Naive thymus-derived CD4-positive, alpha-beta T cell (primary cell): ENCODE measurements at regions of chr14 and their contacts with region 1.

Region 1: GRCh38 chr14:58297762-58298476 is 436 bp upstream of the ARID4A start:
- DNase-seq: peak; percentile 90 to 100 (median 99)
- ATAC-seq: peak; percentile 91
- H3K4me3 ChIP-seq: peak overlapping the region; percentile 91
- H3K4me3 Mint-ChIP-seq: no peak overlapping the region
- H3K27ac ChIP-seq: peak overlapping the region; percentile 94
- H3K27ac Mint-ChIP-seq: no peak overlapping the region
- H3K4me1 ChIP-seq: peaks cover 17 to 23% of the 10 kb centered on the region in 2 donors
- H3K4me1 Mint-ChIP-seq: peaks cover 36 to 64% (median 55%) of the 10 kb centered on the region in 7 donors
- H3K27me3 ChIP-seq: no peaks in the 10 kb centered on the region
- H3K27me3 Mint-ChIP-seq: no peaks in the 10 kb centered on the region

Region 2: GRCh38 chr14:56633544-56633943 is 1664.4 kb before region 1 on chr14:
- CTCF ChIA-PET with region 1: no interaction called
- POLR2A ChIA-PET with region 1: no interaction called
- intact Hi-C with region 1: no loop called
- DNase-seq: no peak
- ATAC-seq: no peak
- H3K4me3 ChIP-seq: no peak overlapping the region
- H3K4me3 Mint-ChIP-seq: no peak overlapping the region
- H3K27ac ChIP-seq: no peak overlapping the region
- H3K27ac Mint-ChIP-seq: no peak overlapping the region
- H3K4me1 ChIP-seq: no peaks in the 10 kb centered on the region
- H3K4me1 Mint-ChIP-seq: peaks cover 0 to 2% (median 0%) of the 10 kb centered on the region in 7 donors
- H3K27me3 ChIP-seq: no peaks in the 10 kb centered on the region
- H3K27me3 Mint-ChIP-seq: no peaks in the 10 kb centered on the region

Region 3: DNA sequence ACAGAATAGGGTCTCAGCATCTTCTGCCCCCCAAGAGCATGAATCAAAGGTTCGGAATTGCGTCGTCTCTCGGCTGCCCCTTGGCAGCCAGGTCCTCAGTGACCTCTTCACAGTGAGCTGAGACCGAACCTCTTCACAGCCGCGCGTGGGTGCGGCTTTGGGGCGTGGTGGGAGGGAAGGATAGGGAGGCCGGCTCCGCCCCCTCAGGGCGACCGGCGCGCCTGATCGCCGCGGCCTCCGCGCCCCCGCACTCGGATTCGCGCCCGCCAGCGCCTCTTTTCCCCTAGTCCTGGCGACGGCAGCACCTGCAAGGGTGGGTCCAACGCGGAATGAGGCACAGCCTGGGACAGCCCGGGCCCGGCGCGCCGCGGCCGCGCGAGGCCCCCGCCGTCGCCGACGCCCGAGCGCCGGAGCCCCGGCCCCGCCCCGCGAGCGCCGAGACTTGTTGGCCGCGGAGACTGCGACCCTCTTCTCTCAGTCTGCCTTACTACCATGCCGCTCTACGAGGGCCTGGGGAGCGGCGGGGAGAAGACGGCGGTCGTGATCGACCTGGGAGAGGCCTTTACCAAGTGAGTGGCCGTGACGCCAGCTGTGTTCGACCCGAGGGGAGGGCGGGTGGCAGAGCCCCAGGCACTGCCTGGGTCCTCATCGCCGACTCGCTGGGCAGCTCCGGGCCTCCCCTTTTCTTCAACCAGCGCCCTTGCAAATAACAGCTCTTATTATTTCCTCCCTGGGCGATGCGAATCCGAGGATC is 98.0 kb before region 1 on chr14 and contains the start of gene ACTR10:
- CTCF ChIA-PET with region 1: no interaction called
- POLR2A ChIA-PET with region 1: interaction called, 17 read pairs
- intact Hi-C with region 1: loop called (anchors 1 kb)
- DNase-seq: peak; percentile 80 to 93 (median 88)
- ATAC-seq: peak; percentile 94
- H3K4me3 ChIP-seq: peak within 1 kb of the TSS; percentile 75
- H3K4me3 Mint-ChIP-seq: peak within 1 kb of the TSS; percentile 90 to 99 (median 97)
- H3K27ac ChIP-seq: peak within 1 kb of the TSS; percentile 87
- H3K27ac Mint-ChIP-seq: peak within 1 kb of the TSS; percentile 93 to 99 (median 98)
- H3K4me1 ChIP-seq: peaks cover 15 to 27% of the 10 kb centered on the region in 2 donors
- H3K4me1 Mint-ChIP-seq: peaks cover 21 to 60% (median 48%) of the 10 kb centered on the region in 7 donors
- H3K27me3 ChIP-seq: no peaks in the 10 kb centered on the region
- H3K27me3 Mint-ChIP-seq: peaks cover 0 to 7% (median 0%) of the 10 kb centered on the region in 5 donors
- total RNA-seq, gene ACTR10: 40.0 to 54.6 (median 50.4) TPM

Region 4: GRCh38 chr14:58215191-58215914 is 82.6 kb before region 1 on chr14:
- CTCF ChIA-PET with region 1: no interaction called
- POLR2A ChIA-PET with region 1: no interaction called
- intact Hi-C with region 1: no loop called
- DNase-seq: no peak
- ATAC-seq: no peak
- H3K4me3 ChIP-seq: no peak overlapping the region
- H3K4me3 Mint-ChIP-seq: no peak overlapping the region
- H3K27ac ChIP-seq: no peak overlapping the region
- H3K27ac Mint-ChIP-seq: peak overlapping the region in 1 of 9 donors; percentile 15
- H3K4me1 ChIP-seq: no peaks in the 10 kb centered on the region
- H3K4me1 Mint-ChIP-seq: peaks cover 0 to 12% (median 3%) of the 10 kb centered on the region in 7 donors
- H3K27me3 ChIP-seq: no peaks in the 10 kb centered on the region
- H3K27me3 Mint-ChIP-seq: no peaks in the 10 kb centered on the region

Region 5: DNA sequence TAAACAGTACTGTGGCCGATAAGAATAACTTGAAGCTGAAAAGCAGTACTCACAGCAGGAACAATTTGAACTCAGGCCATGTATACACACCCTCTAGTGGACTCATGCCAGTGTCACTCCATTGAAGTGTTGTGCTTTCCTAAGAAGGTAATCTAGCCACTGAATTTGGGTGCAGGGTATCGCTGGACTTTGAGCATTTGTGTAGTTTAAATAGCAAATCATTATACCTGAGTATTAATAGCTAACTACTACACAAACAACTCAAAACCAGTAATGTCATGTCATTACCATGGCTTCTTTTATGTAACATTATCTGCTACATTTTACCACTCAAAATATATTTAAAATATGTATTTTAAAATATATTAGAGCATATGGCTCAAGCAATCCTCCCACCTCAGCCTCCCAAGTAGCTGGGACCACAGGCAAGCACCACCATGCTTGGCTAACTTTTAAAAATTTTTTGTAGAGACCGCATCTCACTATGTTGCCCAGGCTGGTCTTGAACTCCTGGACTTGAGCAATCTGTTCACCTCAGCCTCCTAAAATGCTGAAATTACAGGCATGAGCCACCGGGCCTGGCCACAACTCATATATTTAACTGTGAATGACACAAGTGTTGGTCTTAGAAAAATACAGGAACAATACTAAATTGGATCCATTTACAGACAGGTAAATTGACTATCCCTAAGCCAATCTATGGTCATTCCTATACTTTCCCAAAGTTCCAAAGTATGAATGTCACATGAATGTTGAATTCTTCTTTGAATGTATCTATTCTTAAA is 25.1 kb before region 1 on chr14:
- CTCF ChIA-PET with region 1: no interaction called
- POLR2A ChIA-PET with region 1: interaction called, 17 read pairs
- intact Hi-C with region 1: no loop called
- DNase-seq: no peak
- ATAC-seq: peak; percentile 31
- H3K4me3 ChIP-seq: no peak overlapping the region
- H3K4me3 Mint-ChIP-seq: no peak overlapping the region
- H3K27ac ChIP-seq: peak overlapping the region; percentile 4
- H3K27ac Mint-ChIP-seq: peak overlapping the region in 6 of 9 donors; percentile 8 to 75 (median 30)
- H3K4me1 ChIP-seq: peaks cover 25 to 27% of the 10 kb centered on the region in 2 donors
- H3K4me1 Mint-ChIP-seq: peaks cover 20 to 56% (median 34%) of the 10 kb centered on the region in 7 donors
- H3K27me3 ChIP-seq: no peaks in the 10 kb centered on the region
- H3K27me3 Mint-ChIP-seq: no peaks in the 10 kb centered on the region

Region 6: DNA sequence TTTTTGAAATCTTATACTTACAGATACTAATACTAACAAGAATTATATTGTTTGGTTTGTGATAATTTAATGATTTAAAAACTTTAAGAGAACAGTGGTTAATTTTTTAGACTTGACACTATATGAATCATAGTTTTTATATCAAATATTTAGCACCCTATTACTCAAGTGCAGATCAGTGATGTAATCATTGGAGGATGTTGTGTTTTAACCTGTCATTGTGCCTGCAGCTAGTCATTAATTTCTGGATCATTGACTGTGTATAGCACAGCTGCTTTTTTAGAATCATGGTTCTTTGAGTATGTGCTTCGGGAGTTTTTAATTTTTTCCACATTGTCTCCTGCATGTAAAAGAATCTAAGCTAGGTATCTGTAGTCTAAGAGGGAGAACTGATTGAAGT is 17.7 kb after region 1 on chr14:
- CTCF ChIA-PET with region 1: no interaction called
- POLR2A ChIA-PET with region 1: interaction called, 19 read pairs
- intact Hi-C with region 1: no loop called
- DNase-seq: no peak
- ATAC-seq: no peak
- H3K4me3 ChIP-seq: no peak overlapping the region
- H3K4me3 Mint-ChIP-seq: no peak overlapping the region
- H3K27ac ChIP-seq: no peak overlapping the region
- H3K27ac Mint-ChIP-seq: peak overlapping the region in 2 of 9 donors; percentile 56 to 77
- H3K4me1 ChIP-seq: no peaks in the 10 kb centered on the region
- H3K4me1 Mint-ChIP-seq: peaks cover 0 to 18% (median 5%) of the 10 kb centered on the region in 7 donors
- H3K27me3 ChIP-seq: no peaks in the 10 kb centered on the region
- H3K27me3 Mint-ChIP-seq: no peaks in the 10 kb centered on the region

Region 7: DNA sequence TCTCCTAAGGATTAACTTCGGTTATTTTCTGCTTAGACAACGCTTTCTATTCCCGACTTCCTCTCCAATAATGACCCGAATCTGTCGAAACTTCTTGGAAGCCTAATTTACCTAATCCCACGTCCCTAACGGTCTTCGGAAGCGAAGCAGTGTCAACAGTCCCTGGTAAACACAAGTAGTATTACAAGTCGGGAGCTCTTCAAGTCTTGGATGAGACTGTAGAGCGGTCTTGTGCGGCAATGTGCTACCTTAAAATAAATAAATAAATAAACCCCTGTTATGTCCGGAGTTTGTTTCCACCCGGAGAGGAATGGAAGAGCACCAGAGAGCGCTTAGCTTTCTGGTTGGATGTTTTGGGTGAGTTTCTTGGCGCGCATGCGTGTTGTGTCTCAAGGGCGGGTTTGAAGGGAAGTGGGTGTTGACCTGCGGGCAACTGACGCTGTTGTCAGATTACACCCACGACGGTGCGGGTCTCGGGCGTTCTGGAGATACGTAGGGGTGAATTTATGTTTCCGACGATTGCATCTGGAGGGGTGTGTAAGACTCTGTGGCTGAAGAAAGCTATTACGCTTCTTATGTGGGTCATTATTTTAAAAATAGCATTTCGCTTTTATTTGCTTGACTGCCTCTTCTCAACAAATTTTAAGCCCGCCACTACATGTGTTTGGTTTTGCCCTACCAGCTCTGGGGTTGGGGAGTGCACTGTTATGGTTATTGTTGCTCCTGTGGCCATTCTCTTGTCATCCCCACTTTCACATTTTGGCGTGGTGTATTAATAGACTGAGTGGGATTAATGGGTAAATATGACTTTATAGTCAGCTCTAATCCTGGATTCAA is 129.6 kb after region 1 on chr14 and contains the starts of genes KIAA0586 and TIMM9:
- CTCF ChIA-PET with region 1: interaction called, 4 read pairs
- POLR2A ChIA-PET with region 1: interaction called, 49 read pairs
- intact Hi-C with region 1: loop called (anchors 1 kb)
- DNase-seq: peak; percentile 82 to 98 (median 97)
- ATAC-seq: peak; percentile 94
- H3K4me3 ChIP-seq: peak within 1 kb of the TSS; percentile 88
- H3K4me3 Mint-ChIP-seq: peak within 1 kb of the TSS; percentile 82 to 100 (median 94)
- H3K27ac ChIP-seq: peak within 1 kb of the TSS; percentile 93
- H3K27ac Mint-ChIP-seq: peak within 1 kb of the TSS; percentile 95 to 99 (median 98)
- H3K4me1 ChIP-seq: peaks cover 13 to 17% of the 10 kb centered on the region in 2 donors
- H3K4me1 Mint-ChIP-seq: peaks cover 18 to 65% (median 53%) of the 10 kb centered on the region in 7 donors
- H3K27me3 ChIP-seq: no peaks in the 10 kb centered on the region
- H3K27me3 Mint-ChIP-seq: peaks cover 0 to 3% (median 0%) of the 10 kb centered on the region in 5 donors
- total RNA-seq, gene KIAA0586: 26.4 to 52.5 (median 34.8) TPM
- total RNA-seq, gene TIMM9: 22.1 to 42.5 (median 37.0) TPM

Region 8: GRCh38 chr14:58826845-58827686 is 529.1 kb after region 1 on chr14:
- CTCF ChIA-PET with region 1: no interaction called
- POLR2A ChIA-PET with region 1: no interaction called
- intact Hi-C with region 1: no loop called
- DNase-seq: no peak
- ATAC-seq: no peak
- H3K4me3 ChIP-seq: no peak overlapping the region
- H3K4me3 Mint-ChIP-seq: no peak overlapping the region
- H3K27ac ChIP-seq: no peak overlapping the region
- H3K27ac Mint-ChIP-seq: no peak overlapping the region
- H3K4me1 ChIP-seq: no peaks in the 10 kb centered on the region
- H3K4me1 Mint-ChIP-seq: peaks cover 0 to 14% (median 3%) of the 10 kb centered on the region in 7 donors
- H3K27me3 ChIP-seq: no peaks in the 10 kb centered on the region
- H3K27me3 Mint-ChIP-seq: no peaks in the 10 kb centered on the region